ENCODE measurements at regions of chr9 and their contacts with region 1.

Region 1: GRCh38 chr9:104177003-104177611 is 83.0 kb downstream of the SMC2 start:
- DNase-seq: peak; percentile 14
- H3K4me3 ChIP-seq: no peak overlapping the region
- H3K27ac ChIP-seq: no peak overlapping the region
- H3K4me1 ChIP-seq: no peaks in the 10 kb centered on the region
- H3K27me3 ChIP-seq: no peaks in the 10 kb centered on the region
- CTCF ChIP-seq: peak; percentile 14 to 15
- POLR2A ChIP-seq: no peak

Region 2: GRCh38 chr9:104386425-104387069 is 209.4 kb after region 1 on chr9:
- CTCF ChIA-PET with region 1: interaction called, 26 read pairs
- POLR2A ChIA-PET with region 1: no interaction called
- dilution Hi-C with region 1: no loop called
- intact Hi-C with region 1: loop called (anchors 2 kb)
- DNase-seq: peak; percentile 20
- H3K4me3 ChIP-seq: no peak overlapping the region
- H3K27ac ChIP-seq: no peak overlapping the region
- H3K4me1 ChIP-seq: no peaks in the 10 kb centered on the region
- H3K27me3 ChIP-seq: no peaks in the 10 kb centered on the region
- CTCF ChIP-seq: peak; percentile 33 to 41
- POLR2A ChIP-seq: no peak

Region 3: DNA sequence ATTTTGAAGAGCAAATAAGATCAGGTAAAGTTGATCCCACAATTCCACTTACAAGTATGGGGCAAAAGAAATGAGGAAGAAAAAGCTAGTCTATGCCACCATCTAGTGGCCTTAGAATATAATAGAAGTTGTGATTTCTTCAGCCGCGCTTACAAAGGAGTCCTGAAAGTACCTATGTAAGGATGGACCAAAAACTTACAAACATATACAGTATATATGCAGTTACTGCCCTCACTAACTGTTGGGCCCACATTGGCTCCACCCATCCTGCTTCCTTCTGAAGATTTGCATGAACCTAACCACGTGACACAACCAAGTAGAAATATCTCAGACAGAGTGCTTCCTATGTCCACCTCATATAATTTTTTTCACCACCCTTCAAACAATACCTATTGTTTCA is 505.5 kb after region 1 on chr9:
- CTCF ChIA-PET with region 1: no interaction called
- POLR2A ChIA-PET with region 1: no interaction called
- dilution Hi-C with region 1: no loop called
- intact Hi-C with region 1: loop called (anchors 2 kb)
- DNase-seq: peak; percentile 60
- H3K4me3 ChIP-seq: no peak overlapping the region
- H3K27ac ChIP-seq: no peak overlapping the region
- H3K4me1 ChIP-seq: no peaks in the 10 kb centered on the region
- H3K27me3 ChIP-seq: peaks cover 0 to 2% of the 10 kb centered on the region in 2 experiments
- CTCF ChIP-seq: peak; percentile 22 to 31
- POLR2A ChIP-seq: no peak

Measured in endothelial cell of umbilical vein (primary cell).